ENCODE measurements at regions of chr17 and their contacts with region 1.

Region 1: GRCh38 chr17:82551779-82552457 is 32.4 kb downstream of the FOXK2 start:
- DNase-seq: peak; percentile 88
- H3K4me3 Mint-ChIP-seq: no peak overlapping the region
- H3K27ac Mint-ChIP-seq: peak overlapping the region; percentile 67
- H3K4me1 Mint-ChIP-seq: peaks cover 34% of the 10 kb centered on the region
- H3K27me3 Mint-ChIP-seq: no peaks in the 10 kb centered on the region

Region 2: DNA sequence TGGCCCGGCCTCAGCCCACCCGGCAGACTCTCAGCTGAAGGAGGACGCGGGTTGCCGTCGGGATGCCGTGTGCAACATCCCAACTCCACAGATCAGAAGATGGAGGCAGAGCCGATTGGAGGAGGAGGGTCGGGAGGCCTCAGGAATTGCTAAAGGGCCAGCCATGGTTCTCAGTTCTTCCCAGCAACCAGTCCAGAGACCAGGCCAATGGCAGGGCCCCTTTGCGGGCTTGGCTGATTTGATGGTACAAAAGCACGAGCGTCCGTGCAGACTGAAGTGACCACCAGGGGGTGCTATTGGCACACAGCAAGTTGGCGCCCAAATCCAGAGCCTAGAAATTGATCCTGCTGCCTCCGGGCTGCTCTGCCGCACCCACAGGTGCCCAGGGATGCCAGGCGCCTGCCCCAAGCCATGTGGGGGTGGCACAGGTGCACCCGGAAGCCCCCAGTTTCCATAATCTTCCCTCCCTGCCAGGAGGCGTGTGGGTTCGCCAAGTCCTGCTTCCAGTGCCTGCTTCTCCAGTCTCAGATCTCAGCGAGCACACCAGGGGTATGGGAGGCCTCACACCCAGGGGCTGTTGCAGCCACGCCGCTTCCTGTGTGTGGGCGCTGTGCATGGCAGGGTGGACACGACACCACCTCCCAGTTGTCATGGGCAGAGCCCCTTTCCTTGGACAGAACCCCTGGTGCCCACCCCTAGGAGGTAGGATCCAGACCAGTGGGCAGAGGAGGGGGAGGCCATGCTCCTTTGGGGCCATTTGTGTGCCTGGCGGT is 200.0 kb before region 1 on chr17:
- CTCF ChIA-PET with region 1: interaction called, 5 read pairs
- POLR2A ChIA-PET with region 1: no interaction called
- intact Hi-C with region 1: loop called (anchors 5 kb)
- DNase-seq: peak; percentile 88
- H3K4me3 Mint-ChIP-seq: no peak overlapping the region
- H3K27ac Mint-ChIP-seq: no peak overlapping the region
- H3K4me1 Mint-ChIP-seq: peaks cover 4% of the 10 kb centered on the region
- H3K27me3 Mint-ChIP-seq: peaks cover 4% of the 10 kb centered on the region

Region 3: DNA sequence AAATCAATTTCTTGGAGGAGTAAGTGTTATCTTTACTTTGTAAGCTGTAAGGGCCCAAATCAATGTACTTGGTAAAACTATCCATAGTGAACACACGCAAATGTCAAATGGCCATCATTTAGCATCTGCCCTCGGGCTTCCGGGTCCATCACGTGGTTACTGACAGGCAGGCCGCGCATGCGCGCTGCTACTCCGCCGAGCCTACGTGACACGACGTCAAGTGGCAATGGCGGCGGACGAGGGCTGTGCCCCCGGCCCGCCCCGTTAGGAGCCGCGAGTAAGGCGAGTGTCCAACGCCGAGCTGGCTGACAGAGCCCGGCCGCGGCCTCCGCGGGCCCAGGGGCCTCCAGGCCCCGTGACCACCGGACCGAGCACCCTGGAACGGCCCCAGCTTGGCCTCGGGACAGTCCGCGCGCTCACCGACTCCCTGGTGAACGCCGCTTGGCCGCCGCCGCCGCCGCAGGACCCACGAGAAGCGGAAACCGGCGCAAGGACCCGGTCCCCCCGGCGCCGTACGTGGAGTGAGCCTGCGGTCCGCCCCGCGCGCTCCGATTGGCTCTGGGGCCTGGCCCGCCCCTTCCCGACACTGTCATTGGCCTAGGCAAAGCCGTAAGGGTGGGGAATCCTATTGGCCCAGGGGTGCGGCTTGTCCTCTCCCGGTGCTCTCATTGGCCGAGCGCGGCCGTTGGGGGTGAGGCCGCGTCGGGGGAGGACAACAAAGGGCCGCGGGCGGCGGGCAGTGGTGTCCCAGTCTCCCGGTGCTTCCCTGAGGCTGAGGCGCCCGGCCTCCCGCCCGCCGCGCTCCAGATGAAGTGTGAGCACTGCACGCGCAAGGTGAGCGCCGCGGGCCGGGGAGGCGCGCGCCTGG is 93.7 kb before region 1 on chr17 and contains the start of gene NARF:
- CTCF ChIA-PET with region 1: no interaction called
- POLR2A ChIA-PET with region 1: no interaction called
- intact Hi-C with region 1: loop called (anchors 2 kb)
- DNase-seq: peak; percentile 97
- H3K4me3 Mint-ChIP-seq: peak within 1 kb of the TSS; percentile 78
- H3K27ac Mint-ChIP-seq: peak within 1 kb of the TSS; percentile 97
- H3K4me1 Mint-ChIP-seq: peaks cover 40% of the 10 kb centered on the region
- H3K27me3 Mint-ChIP-seq: no peaks in the 10 kb centered on the region
- total RNA-seq, gene NARF: 101 to 110 TPM

Region 4: GRCh38 chr17:82486186-82487094 is 65.5 kb before region 1 on chr17:
- CTCF ChIA-PET with region 1: no interaction called
- POLR2A ChIA-PET with region 1: no interaction called
- intact Hi-C with region 1: no loop called
- DNase-seq: no peak
- H3K4me3 Mint-ChIP-seq: no peak overlapping the region
- H3K27ac Mint-ChIP-seq: no peak overlapping the region
- H3K4me1 Mint-ChIP-seq: peaks cover 12% of the 10 kb centered on the region
- H3K27me3 Mint-ChIP-seq: no peaks in the 10 kb centered on the region

Region 5: DNA sequence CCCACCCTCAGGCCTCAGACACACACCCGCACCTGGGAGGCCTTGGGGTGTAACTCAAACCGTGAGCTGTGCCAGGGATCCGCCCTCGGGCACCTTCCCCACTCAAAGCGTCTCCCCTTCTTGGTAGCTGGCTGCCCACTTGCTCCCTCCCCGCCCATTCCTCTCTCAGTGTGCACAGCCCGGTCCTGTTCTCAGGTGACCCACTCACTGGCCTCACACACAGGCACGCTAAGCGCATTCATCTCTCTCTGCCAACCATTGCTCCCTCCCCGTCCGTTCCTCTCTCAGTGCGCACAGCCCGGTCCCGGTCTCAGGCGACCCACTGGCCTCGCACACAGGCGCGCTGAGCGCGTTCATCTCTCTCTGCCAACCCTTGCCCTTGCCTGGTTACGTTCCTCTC is 75.5 kb after region 1 on chr17:
- CTCF ChIA-PET with region 1: no interaction called
- POLR2A ChIA-PET with region 1: no interaction called
- intact Hi-C with region 1: no loop called
- DNase-seq: no peak
- H3K4me3 Mint-ChIP-seq: no peak overlapping the region
- H3K27ac Mint-ChIP-seq: no peak overlapping the region
- H3K4me1 Mint-ChIP-seq: peaks cover 3% of the 10 kb centered on the region
- H3K27me3 Mint-ChIP-seq: no peaks in the 10 kb centered on the region

Measured in activated CD4-positive, alpha-beta memory T cell treated with anti-CD3 and anti-CD28 coated beads for 36 hours (primary cell).